PC-9 (cell line): ENCODE measurements at regions of chr6 and their contacts with region 1.

Region 1: GRCh38 chr6:24766680-24767462 is 7.9 kb upstream of the GMNN start:
- DNase-seq: peak in 1 of 2 experiments; percentile 52
- H3K4me3 ChIP-seq: no peak overlapping the region
- H3K27ac ChIP-seq: no peak overlapping the region
- H3K4me1 ChIP-seq: no peaks in the 10 kb centered on the region
- H3K27me3 ChIP-seq: no peaks in the 10 kb centered on the region
- CTCF ChIP-seq: peak; percentile 75

Region 2: GRCh38 chr6:24391756-24392405 is 375.0 kb before region 1 on chr6:
- CTCF ChIA-PET with region 1: interaction called, 10 read pairs
- POLR2A ChIA-PET with region 1: no interaction called
- intact Hi-C with region 1: no loop called
- DNase-seq: no peak
- H3K4me3 ChIP-seq: no peak overlapping the region
- H3K27ac ChIP-seq: no peak overlapping the region
- H3K4me1 ChIP-seq: peaks cover 12% of the 10 kb centered on the region
- H3K27me3 ChIP-seq: no peaks in the 10 kb centered on the region
- CTCF ChIP-seq: no peak

Region 3: DNA sequence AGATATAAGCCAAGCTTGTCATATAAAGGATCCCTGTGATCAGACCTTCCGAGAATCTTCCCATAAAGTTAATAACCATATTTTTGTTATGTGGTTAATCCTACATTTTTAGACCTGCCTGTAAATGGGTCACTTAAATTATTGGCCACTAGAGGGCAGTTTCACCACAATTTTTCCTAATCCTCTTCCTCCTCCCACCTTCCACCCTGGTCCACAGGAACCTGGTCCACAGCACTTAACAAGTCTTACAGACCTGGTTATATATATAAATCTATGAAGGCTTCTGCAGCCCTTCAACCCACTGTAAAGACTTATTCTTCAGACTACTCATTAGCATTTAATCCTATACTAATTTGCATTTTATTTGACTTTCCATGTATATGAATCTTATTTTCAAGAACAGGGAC is 335.8 kb before region 1 on chr6:
- CTCF ChIA-PET with region 1: no interaction called
- POLR2A ChIA-PET with region 1: no interaction called
- intact Hi-C with region 1: loop called (anchors 2 kb)
- DNase-seq: peak in 1 of 2 experiments; percentile 32
- H3K4me3 ChIP-seq: no peak overlapping the region
- H3K27ac ChIP-seq: no peak overlapping the region
- H3K4me1 ChIP-seq: peaks cover 20% of the 10 kb centered on the region
- H3K27me3 ChIP-seq: no peaks in the 10 kb centered on the region
- CTCF ChIP-seq: peak; percentile 88

Region 4: DNA sequence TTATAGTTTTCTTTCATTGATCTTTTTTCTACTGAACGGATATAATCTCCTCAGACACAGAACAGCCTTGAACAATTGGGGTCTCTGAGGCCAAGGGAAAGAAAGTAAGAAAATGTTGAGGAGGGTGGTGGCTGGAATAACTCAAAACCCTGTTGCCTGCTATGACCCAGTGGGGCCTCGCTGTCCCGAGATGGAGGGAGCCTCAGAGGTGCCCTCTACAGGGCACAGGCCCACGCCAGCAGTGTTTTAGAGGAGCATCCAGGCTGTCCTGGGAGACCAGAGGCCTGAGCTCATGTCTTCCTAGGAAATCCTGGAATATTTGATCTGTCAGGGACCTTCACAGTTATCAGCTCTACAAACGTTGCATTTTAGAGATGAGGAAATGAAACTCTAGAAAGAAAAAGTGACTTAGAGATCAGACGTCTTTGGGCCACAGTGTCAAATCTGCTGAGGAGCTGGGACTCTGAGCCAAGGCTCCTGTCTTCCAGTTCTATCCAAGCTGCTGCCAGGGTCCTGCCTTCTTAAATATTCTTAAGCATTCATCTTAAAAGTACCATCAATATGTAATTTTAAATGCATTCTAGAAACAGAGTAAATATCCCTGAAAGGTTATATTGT is 245.8 kb before region 1 on chr6:
- CTCF ChIA-PET with region 1: no interaction called
- POLR2A ChIA-PET with region 1: no interaction called
- intact Hi-C with region 1: loop called (anchors 2 kb)
- DNase-seq: peak in 1 of 2 experiments; percentile 55
- H3K4me3 ChIP-seq: no peak overlapping the region
- H3K27ac ChIP-seq: no peak overlapping the region
- H3K4me1 ChIP-seq: no peaks in the 10 kb centered on the region
- H3K27me3 ChIP-seq: no peaks in the 10 kb centered on the region
- CTCF ChIP-seq: peak; percentile 72

Region 5: GRCh38 chr6:24689964-24690363 is 76.9 kb before region 1 on chr6:
- CTCF ChIA-PET with region 1: no interaction called
- POLR2A ChIA-PET with region 1: no interaction called
- intact Hi-C with region 1: loop called (anchors 1 kb)
- DNase-seq: no peak
- H3K4me3 ChIP-seq: no peak overlapping the region
- H3K27ac ChIP-seq: no peak overlapping the region
- H3K4me1 ChIP-seq: peaks cover 11% of the 10 kb centered on the region
- H3K27me3 ChIP-seq: no peaks in the 10 kb centered on the region
- CTCF ChIP-seq: no peak

Region 6: DNA sequence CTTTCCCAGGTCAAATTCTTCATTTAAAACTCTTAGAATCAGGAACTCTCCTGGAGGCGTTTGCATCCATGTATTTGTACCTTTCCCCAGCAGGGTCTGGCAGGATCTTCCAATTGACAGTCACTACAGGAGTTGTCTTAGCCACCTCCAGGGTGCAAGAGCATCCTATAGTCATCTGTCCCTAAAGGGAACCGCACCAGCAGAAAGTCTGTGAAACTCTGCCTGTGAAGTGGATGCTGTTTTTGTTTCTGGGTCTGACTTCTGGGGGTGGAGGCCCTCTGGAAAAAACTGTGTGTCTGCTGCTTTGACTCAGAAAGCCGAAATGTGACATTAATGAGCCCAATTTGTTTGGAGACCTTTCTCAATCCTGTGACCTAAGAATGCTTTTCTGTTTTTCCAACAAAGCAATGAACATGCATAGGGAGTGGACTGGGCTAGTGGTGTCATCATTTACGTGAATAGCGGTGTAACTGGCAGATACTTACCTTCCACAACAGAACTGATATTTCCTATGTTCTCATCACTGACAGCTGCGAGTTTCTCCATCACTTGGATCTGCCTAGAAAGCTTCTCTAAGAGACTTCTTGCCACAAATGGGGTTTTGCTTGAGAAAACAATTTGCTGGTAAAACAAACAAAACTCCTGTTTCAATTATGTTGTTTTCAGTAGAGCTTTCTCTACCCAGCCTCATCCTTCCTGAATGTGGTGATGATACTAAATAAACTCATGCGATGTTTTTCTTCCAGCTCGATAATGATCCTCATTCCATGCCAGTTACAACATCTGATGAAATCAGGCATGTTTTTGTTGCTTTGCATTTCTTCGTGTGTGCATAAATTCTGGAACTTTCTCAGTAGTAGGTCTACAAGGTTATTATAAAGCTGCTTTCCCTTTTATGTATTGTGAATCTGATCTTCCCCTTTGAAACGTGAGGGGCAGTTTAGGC is 65.2 kb after region 1 on chr6:
- CTCF ChIA-PET with region 1: no interaction called
- POLR2A ChIA-PET with region 1: interaction called, 16 read pairs
- intact Hi-C with region 1: no loop called
- DNase-seq: no peak
- H3K4me3 ChIP-seq: no peak overlapping the region
- H3K27ac ChIP-seq: no peak overlapping the region
- H3K4me1 ChIP-seq: no peaks in the 10 kb centered on the region
- H3K27me3 ChIP-seq: no peaks in the 10 kb centered on the region
- CTCF ChIP-seq: no peak

Region 7: GRCh38 chr6:25202505-25202904 is 435.6 kb after region 1 on chr6:
- CTCF ChIA-PET with region 1: interaction called, 14 read pairs
- POLR2A ChIA-PET with region 1: no interaction called
- intact Hi-C with region 1: no loop called
- DNase-seq: no peak
- H3K4me3 ChIP-seq: no peak overlapping the region
- H3K27ac ChIP-seq: no peak overlapping the region
- H3K4me1 ChIP-seq: no peaks in the 10 kb centered on the region
- H3K27me3 ChIP-seq: no peaks in the 10 kb centered on the region
- CTCF ChIP-seq: no peak